Activated CD4-positive, alpha-beta T cell treated with anti-CD3 and anti-CD28 coated beads, Interleukin-2, amount 10 ng/mL, durations not matched to agents 24 days and 14 days (primary cell): ENCODE measurements at regions of chr1 and their contacts with region 1.

Region 1: DNA sequence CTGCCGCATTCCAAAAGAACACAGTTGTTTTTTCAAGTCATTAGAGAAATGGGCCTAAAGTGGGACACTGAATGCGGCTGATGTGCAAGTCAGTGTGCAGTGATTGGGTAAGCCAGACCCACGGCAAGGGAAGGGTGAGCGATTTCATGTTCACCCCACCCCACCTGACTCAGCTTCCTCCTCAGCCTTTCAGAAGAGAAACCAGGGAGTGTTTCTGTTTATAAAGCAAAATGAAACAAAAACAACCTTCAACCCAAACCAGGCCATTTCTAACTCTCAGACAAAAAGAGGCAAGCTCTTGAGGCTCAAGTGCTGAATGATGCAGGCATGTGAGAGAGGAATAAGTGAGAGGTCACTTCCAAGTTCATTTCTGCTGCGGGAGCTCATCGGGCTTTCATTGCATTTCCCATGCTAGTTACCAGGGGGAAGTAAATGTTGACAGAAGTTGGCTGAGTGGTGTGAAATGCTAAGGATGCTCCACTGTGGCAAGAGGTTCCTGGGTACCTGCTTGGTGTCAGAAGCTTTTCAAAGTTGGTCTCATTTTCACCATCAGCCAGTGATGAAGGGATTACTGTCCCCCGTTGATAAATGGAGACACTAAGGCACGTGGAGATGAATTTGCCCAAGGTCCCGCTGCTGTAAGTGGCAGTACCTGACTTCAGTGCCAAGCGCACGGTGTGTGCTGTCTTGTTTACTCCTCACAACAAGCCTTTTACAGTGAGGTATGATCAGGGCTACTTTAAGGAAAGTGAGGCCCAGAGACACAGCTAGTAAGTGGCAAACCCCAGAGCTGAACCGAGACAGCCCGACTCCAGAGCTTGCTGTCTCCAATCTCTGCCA is 29.1 kb downstream of the STPG1 start:
- DNase-seq: peak; percentile 83
- H3K4me3 Mint-ChIP-seq: peak overlapping the region; percentile 65
- H3K27ac Mint-ChIP-seq: peak overlapping the region; percentile 79
- H3K4me1 Mint-ChIP-seq: peaks cover 31% of the 10 kb centered on the region
- H3K27me3 Mint-ChIP-seq: no peaks in the 10 kb centered on the region

Region 2: DNA sequence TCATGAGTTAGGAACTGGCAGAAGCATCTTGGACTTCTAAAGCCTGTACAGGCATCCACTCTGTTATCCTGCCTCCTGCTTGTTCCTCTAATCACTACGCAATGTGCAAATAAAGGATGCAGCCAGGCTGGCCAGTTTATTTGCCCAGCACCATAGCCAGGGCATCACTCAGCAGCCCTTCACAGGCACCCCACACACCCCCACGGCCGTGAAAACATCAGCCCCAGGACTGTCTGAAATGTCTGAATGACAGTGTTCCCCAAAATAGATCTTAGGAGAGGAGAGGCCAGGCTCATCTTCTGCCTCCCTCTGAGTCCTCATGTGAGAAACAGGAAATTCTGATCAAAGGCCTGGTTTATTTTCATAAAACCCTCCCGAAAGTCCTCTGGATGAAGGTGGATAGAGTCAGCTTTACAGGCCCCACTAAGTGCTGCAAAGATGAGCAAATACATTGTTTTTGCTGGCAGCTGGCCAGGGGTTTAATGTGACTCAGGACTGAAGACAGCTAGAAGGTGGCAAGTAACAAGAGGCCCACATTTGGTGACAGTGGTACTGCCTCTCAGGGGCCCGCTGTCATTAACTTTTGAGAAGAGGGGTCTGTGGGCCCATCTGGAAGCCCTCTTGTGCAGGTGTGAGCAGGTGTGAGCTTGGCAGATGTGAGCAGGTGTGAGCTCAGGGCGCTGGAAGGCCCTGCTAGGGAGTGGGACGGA is 32.4 kb before region 1 on chr1:
- intact Hi-C with region 1: loop called (anchors 1 kb)
- DNase-seq: peak; percentile 71
- H3K4me3 Mint-ChIP-seq: peak overlapping the region; percentile 22
- H3K27ac Mint-ChIP-seq: peak overlapping the region; percentile 73
- H3K4me1 Mint-ChIP-seq: peaks cover 37% of the 10 kb centered on the region
- H3K27me3 Mint-ChIP-seq: no peaks in the 10 kb centered on the region

Region 3: DNA sequence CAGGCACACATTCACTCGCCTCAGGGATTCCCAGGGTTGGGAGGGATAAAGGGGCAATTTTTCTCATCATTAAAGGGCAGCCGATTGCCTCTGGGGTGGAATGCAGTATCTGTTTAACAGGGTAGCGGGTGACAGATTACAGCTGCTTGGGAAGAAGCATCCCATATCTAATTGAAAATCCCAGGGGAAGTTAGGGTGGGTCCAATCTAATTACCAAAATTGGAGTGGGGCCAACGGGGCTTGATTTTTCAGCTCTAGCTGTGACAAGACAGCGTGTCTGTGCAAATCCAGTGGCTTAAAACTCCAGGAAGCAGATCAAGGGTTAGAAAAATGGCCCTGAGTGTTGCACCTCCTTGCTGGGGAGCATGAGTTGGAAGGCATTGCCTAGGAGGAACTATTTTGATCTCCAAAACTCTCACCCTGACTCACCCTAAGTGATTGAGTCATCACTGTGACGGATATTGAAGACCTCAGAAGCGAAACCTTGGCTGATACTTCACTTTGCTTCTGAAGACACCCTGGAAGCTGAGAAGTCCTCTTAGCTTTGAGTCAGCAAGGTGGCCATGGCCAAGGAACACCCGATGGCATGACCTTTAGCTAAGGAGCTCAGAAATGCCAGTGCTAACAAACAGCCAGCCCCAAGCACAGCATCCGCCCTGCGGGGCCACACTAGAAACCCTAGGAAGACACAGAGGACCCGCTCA is 19.3 kb before region 1 on chr1:
- intact Hi-C with region 1: loop called (anchors 1 kb)
- DNase-seq: peak; percentile 81
- H3K4me3 Mint-ChIP-seq: no peak overlapping the region
- H3K27ac Mint-ChIP-seq: peak overlapping the region; percentile 83
- H3K4me1 Mint-ChIP-seq: peaks cover 27% of the 10 kb centered on the region
- H3K27me3 Mint-ChIP-seq: peaks cover 5% of the 10 kb centered on the region

Region 4: GRCh38 chr1:24400085-24400484 is 15.6 kb after region 1 on chr1:
- intact Hi-C with region 1: no loop called
- DNase-seq: peak; percentile 13
- H3K4me3 Mint-ChIP-seq: no peak overlapping the region
- H3K27ac Mint-ChIP-seq: no peak overlapping the region
- H3K4me1 Mint-ChIP-seq: peaks cover 2% of the 10 kb centered on the region
- H3K27me3 Mint-ChIP-seq: no peaks in the 10 kb centered on the region

Region 5: DNA sequence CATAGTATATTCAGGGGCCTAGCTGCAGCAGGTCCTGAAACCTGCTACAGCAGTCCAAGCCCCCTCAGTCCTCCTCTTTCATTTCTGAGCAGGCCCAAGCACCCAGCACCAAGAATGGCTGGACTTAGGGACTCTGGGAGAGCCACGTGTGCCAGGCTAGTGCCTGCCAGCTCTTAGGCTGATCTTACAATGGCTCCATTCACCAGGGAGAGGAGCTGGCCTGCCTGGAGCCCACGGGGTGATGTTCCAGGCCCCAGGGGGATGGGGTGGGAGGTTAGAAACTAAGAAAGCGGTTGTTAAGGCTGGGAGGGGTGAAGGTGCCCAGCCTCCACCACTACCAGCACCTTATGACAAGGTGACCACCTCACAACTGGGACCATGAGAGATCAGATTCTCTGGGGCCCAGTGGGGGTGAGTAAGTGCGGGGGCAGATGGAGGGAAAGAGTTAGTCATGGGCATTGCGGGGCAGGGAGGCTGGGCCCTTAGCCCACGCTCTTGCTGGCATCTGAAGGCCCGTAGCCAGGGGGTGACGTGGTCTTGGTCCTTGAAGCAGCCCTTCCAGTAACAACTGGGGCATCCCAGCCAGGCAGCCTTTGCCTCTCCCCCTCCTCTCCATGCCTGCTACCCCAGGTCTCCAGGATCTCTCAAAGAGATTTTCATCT is 330.5 kb after region 1 on chr1:
- intact Hi-C with region 1: no loop called
- DNase-seq: no peak
- H3K4me3 Mint-ChIP-seq: no peak overlapping the region
- H3K27ac Mint-ChIP-seq: no peak overlapping the region
- H3K4me1 Mint-ChIP-seq: peaks cover 10% of the 10 kb centered on the region
- H3K27me3 Mint-ChIP-seq: no peaks in the 10 kb centered on the region